ENCODE measurements at regions of chr9 and their contacts with region 1.

Region 1: DNA sequence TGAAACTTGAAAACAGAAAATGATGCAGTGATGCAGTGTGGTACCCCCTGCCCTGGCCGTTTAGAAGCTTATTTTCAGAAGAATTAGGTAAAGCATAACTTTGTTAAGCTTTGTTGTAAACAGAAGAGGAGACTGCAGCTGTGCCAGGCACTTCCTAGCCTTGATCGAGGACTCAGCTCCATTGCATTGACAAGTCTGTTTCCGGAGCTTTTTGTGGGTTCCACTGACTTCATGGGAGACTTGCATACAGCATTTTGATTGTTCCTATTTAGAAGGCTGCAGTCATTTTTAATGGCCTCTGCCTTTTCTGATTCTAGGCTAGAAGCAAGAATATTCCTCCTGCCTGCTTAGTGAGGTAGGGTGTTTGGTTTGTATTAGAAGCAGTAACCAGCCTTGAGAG is 12.3 kb downstream of the MVB12B start:
- DNase-seq: no peak
- H3K4me3 ChIP-seq: no peak overlapping the region
- H3K27me3 ChIP-seq: no peaks in the 10 kb centered on the region
- CTCF ChIP-seq: no peak

Region 2: GRCh38 chr9:126326228-126327005 is 12.5 kb before region 1 on chr9 and contains the start of gene MVB12B:
- CTCF ChIA-PET with region 1: interaction called, 10 read pairs
- POLR2A ChIA-PET with region 1: no interaction called
- DNase-seq: no peak
- H3K4me3 ChIP-seq: peak within 1 kb of the TSS; percentile 58
- H3K27me3 ChIP-seq: no peaks in the 10 kb centered on the region
- CTCF ChIP-seq: no peak
- polyA plus RNA-seq, gene MVB12B: 2.1 and 2.7 TPM in 2 replicates

Region 3: DNA sequence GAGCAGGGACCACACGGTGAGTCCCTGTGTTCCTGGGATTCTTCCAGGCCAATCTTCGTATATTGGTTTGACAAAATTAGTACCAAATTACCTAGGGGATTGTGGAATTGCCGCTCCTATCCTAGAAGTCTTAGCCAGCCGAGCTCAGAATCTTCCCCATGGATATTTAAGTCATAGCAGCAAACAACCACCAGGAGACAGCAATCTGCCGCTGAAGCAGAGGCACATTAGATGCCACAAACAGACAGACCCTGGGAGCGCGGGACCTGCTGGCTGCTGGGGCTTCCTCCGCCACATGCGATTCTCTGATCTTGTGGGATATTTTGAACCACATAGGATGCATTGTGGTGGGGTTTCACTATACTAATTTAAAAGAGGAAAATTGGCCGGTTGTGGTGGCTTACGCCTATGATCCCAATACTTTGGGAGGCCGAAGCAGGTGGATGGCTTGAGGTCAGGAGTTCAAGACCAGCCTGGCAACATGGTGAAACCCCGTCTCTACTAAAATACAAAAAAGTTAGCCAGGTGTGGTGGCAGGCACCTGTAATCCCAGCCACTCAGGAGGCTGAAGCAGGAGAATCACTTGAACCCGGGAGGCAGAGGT is 434.2 kb after region 1 on chr9:
- CTCF ChIA-PET with region 1: no interaction called
- POLR2A ChIA-PET with region 1: no interaction called
- DNase-seq: no peak
- H3K4me3 ChIP-seq: no peak overlapping the region
- H3K27me3 ChIP-seq: peaks cover 2% of the 10 kb centered on the region
- CTCF ChIP-seq: peak; percentile 57

Measured in BJ (cell line).